Head of caudate nucleus (tissue), 42 donors: ENCODE measurements at regions of chr7 and their contacts with region 1.

Region 1: GRCh38 chr7:51067757-51068156 is 248.9 kb downstream of the COBL start:
- DNase-seq: peak; percentile 25 to 91 (median 76)

Region 2: DNA sequence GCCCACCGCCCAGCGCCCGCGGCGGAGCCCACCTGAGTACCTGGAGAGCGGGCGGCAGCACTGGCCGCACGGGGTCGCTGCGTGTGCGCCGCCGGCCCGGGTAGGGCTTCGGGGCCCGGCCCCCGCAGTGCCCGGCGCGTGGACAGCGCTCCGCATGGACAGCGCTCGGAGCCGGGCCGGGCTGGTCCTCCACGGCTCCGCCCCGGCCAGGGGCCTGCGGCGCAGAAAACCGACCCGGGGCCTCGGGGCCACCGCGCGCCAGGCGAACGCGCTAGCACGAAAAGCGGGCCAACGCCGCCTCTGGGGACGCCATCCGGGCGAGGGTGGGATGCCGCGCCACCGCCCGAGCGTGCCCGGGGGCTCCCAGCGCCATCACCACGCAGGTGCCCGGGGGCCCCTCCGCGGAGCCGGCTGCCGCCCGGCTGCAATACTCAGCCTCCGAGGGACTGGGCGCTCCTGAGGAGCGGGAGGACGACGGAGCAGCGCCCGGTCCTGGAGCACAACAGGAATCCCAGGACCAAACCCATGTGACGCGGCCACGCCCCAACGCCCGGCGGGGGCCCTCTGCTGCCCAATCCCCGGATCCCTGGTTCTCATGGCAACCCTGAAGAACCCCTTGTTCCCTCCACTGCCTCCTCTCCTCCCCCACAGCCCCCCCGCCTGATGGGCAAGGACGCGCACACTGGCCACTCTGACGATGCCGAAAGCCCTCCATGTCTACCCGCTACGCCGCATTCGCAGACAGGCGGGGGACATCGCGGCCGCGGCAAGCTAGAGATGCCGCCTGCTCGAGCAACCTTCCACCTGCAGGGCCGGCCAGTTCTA is 285.2 kb before region 1 on chr7 and contains the start of gene GRB10:
- intact Hi-C with region 1: loop called (anchors 10 kb)
- DNase-seq: peak; percentile 78 to 95 (median 87)

Region 3: DNA sequence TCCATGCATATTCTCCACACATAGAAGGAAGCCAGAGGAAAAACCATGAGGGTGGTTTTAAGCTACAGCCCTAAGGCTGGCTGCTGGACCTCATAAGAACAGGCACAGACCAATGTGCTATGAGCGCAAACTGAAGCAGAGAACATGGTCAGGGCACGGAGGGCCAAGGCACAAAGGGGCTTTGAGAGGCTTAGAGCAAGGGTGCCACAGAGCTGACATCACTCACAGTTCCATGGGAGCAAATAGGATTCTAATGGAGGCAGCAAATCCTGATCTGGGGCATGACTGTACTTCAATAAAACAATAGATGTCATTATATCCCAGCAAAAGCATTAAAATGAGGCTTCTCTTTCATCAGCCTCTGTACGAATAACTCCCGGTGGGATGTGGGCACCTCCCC is 86.4 kb after region 1 on chr7:
- intact Hi-C with region 1: loop called (anchors 5 kb)
- DNase-seq: peak; percentile 51 to 92 (median 80)

Region 4: GRCh38 chr7:51224811-51225612 is 157.3 kb after region 1 on chr7:
- intact Hi-C with region 1: no loop called
- DNase-seq: peak in 37 of 42 donors; percentile 28 to 80 (median 60)

Region 5: GRCh38 chr7:51569581-51569980 is 501.8 kb after region 1 on chr7:
- intact Hi-C with region 1: no loop called
- DNase-seq: no peak